ENCODE measurements at regions of chr2 and their contacts with region 1.

Region 1: GRCh38 chr2:73293534-73294171 is at the start of gene EGR4:
- DNase-seq: peak; percentile 70 to 96 (median 88)
- ATAC-seq: peak; percentile 94
- H3K4me3 ChIP-seq: peak within 1 kb of the TSS; percentile 72
- H3K4me3 Mint-ChIP-seq: peak within 1 kb of the TSS; percentile 59 to 82 (median 72)
- H3K27ac ChIP-seq: no peak within 1 kb of the TSS
- H3K27ac Mint-ChIP-seq: peak within 1 kb of the TSS in 4 of 9 donors; percentile 9 to 81 (median 30)
- H3K4me1 ChIP-seq: peaks cover 17 to 18% of the 10 kb centered on the region in 2 donors
- H3K4me1 Mint-ChIP-seq: peaks cover 7 to 25% (median 14%) of the 10 kb centered on the region in 7 donors
- H3K27me3 ChIP-seq: peaks cover 11 to 25% of the 10 kb centered on the region in 2 donors
- H3K27me3 Mint-ChIP-seq: peaks cover 48 to 83% (median 66%) of the 10 kb centered on the region in 5 donors
- total RNA-seq, gene EGR4: 0.15 to 0.16 (median 0.15) TPM in 3 of 5 experiments, not detected in the others

Region 2: DNA sequence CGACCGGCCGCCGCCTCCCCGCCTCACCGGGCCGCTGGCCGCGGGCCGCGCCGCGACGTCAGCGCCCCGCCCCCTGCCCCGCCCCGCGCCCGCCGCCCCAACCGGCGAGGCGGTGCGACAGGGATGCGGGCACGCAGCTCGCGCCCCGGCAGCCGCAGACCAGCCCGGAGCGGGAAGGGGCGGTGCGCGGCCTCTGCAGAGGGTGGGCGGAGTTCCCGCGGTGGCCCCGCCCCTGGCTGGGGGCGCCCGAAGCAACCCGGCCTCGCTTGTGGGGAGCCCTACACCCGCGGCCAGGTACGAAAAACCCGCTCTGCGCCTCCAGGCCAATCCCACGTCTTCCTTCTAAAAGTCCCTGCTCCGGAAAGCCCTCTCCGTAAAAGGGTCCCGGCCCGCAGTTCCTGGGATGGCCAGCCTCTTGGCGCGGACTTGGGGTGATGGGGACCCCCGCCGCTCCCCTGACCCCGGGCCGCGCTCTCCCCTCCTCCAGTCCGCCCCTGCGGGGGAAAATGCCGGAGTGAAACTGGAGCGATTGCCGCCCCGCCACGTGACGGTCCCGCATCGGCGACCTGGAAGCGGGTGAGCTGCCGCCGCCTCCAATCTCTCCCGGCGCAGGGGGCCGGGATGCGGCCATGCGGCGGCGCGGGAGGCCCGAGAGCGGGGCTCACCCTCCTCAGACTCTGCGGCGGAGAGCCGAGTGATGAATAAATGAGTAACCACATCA is 180.6 kb before region 1 on chr2 and contains the start of gene RAB11FIP5:
- CTCF ChIA-PET with region 1: no interaction called
- POLR2A ChIA-PET with region 1: no interaction called
- intact Hi-C with region 1: loop called in 1 of 2 experiments (anchors 5 kb)
- DNase-seq: peak; percentile 70 to 88 (median 76)
- ATAC-seq: peak; percentile 94
- H3K4me3 ChIP-seq: peak within 1 kb of the TSS; percentile 68
- H3K4me3 Mint-ChIP-seq: peak within 1 kb of the TSS; percentile 80 to 92 (median 88)
- H3K27ac ChIP-seq: peak within 1 kb of the TSS; percentile 61
- H3K27ac Mint-ChIP-seq: peak within 1 kb of the TSS in 8 of 9 donors; percentile 41 to 81 (median 74)
- H3K4me1 ChIP-seq: peaks cover 4 to 13% of the 10 kb centered on the region in 2 donors
- H3K4me1 Mint-ChIP-seq: peaks cover 9 to 33% (median 28%) of the 10 kb centered on the region in 7 donors
- H3K27me3 ChIP-seq: no peaks in the 10 kb centered on the region
- H3K27me3 Mint-ChIP-seq: peaks cover 0 to 14% (median 0%) of the 10 kb centered on the region in 5 donors
- total RNA-seq, gene RAB11FIP5: 8.6 to 13.2 (median 11.2) TPM

Region 3: DNA sequence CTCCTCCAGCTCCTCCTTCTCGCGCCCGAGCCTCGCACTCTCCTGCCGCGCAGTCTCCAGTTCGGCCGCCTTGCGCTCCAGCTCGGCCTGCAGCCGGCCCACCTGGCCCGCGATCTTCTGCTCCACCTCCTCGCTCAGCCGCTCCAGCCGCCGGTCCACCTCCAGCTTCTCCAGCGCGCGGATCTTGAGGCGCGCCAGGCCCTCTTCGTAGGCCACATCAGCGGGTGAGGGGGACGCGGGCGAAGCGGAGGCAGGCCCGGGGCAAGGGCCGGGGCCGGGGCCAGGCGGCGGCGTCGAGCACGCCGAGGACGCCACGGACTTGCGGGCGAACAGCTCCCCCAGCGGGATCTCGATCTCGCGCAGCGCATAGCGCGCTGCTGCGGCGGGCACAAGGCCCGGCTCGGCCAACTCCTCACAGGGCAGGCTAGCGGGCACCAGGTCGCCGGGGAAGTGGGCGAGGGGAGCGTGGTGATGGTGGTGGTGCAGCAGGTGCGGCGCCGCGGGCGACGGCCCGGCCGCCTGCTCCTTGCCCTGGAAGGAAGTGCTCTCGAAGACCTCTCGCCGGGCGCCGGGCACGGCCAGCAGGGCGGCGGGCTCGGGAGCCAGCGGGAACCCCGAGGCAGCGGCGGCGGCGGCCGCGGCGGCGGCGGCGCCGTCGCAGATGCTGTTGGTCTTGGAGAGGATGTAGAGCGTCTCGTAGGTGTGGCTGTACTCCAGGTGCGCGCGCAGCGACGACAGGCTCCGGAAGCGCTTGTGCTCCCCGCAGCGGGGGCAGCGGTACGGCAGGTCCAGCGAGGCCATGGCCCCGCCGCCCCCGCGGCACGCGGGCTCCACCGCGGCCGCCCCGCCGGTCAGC is 24.6 kb before region 1 on chr2:
- CTCF ChIA-PET with region 1: no interaction called
- POLR2A ChIA-PET with region 1: interaction called, 3 read pairs
- intact Hi-C with region 1: loop called (anchors 1 kb)
- DNase-seq: peak; percentile 62 to 81 (median 76)
- ATAC-seq: peak; percentile 91
- H3K4me3 ChIP-seq: peak overlapping the region; percentile 35
- H3K4me3 Mint-ChIP-seq: peak overlapping the region in 9 of 10 donors; percentile 32 to 78 (median 64)
- H3K27ac ChIP-seq: peak overlapping the region; percentile 62
- H3K27ac Mint-ChIP-seq: peak overlapping the region in 4 of 9 donors; percentile 29 to 81 (median 56)
- H3K4me1 ChIP-seq: peaks cover 0 to 12% of the 10 kb centered on the region in 2 donors
- H3K4me1 Mint-ChIP-seq: peaks cover 23 to 34% (median 26%) of the 10 kb centered on the region in 7 donors
- H3K27me3 ChIP-seq: no peaks in the 10 kb centered on the region
- H3K27me3 Mint-ChIP-seq: no peaks in the 10 kb centered on the region

Region 4: GRCh38 chr2:73870084-73870483 is 576.4 kb after region 1 on chr2:
- CTCF ChIA-PET with region 1: no interaction called
- POLR2A ChIA-PET with region 1: no interaction called
- intact Hi-C with region 1: no loop called
- DNase-seq: no peak
- ATAC-seq: no peak
- H3K4me3 ChIP-seq: no peak overlapping the region
- H3K4me3 Mint-ChIP-seq: no peak overlapping the region
- H3K27ac ChIP-seq: no peak overlapping the region
- H3K27ac Mint-ChIP-seq: no peak overlapping the region
- H3K4me1 ChIP-seq: no peaks in the 10 kb centered on the region
- H3K4me1 Mint-ChIP-seq: no peaks in the 10 kb centered on the region
- H3K27me3 ChIP-seq: no peaks in the 10 kb centered on the region
- H3K27me3 Mint-ChIP-seq: no peaks in the 10 kb centered on the region

Region 5: GRCh38 chr2:74573747-74574562 is 1280.3 kb after region 1 on chr2:
- CTCF ChIA-PET with region 1: no interaction called
- POLR2A ChIA-PET with region 1: no interaction called
- intact Hi-C with region 1: loop called in 1 of 2 experiments (anchors 5 kb)
- DNase-seq: peak in 6 of 9 donors; percentile 21 to 49 (median 42)
- ATAC-seq: peak; percentile 75
- H3K4me3 ChIP-seq: peak overlapping the region; percentile 20
- H3K4me3 Mint-ChIP-seq: peak overlapping the region; percentile 46 to 82 (median 75)
- H3K27ac ChIP-seq: peak overlapping the region; percentile 46
- H3K27ac Mint-ChIP-seq: peak overlapping the region; percentile 62 to 92 (median 86)
- H3K4me1 ChIP-seq: peaks cover 0 to 13% of the 10 kb centered on the region in 2 donors
- H3K4me1 Mint-ChIP-seq: peaks cover 16 to 44% (median 17%) of the 10 kb centered on the region in 7 donors
- H3K27me3 ChIP-seq: no peaks in the 10 kb centered on the region
- H3K27me3 Mint-ChIP-seq: peaks cover 0 to 16% (median 0%) of the 10 kb centered on the region in 5 donors

Measured in naive thymus-derived CD4-positive, alpha-beta T cell (primary cell).